ENCODE measurements at regions of chr9 and their contacts with region 1.

Region 1: GRCh38 chr9:83649080-83649479 is 26.1 kb downstream of the IDNK start:
- DNase-seq: peak; percentile 62 to 85 (median 76)
- ATAC-seq: peak; percentile 95
- H3K4me3 ChIP-seq: no peak overlapping the region
- H3K4me3 Mint-ChIP-seq: no peak overlapping the region
- H3K27ac ChIP-seq: no peak overlapping the region
- H3K27ac Mint-ChIP-seq: no peak overlapping the region
- H3K4me1 ChIP-seq: no peaks in the 10 kb centered on the region
- H3K4me1 Mint-ChIP-seq: peaks cover 7% of the 10 kb centered on the region
- H3K27me3 ChIP-seq: no peaks in the 10 kb centered on the region
- H3K27me3 Mint-ChIP-seq: no peaks in the 10 kb centered on the region
- CTCF ChIP-seq: peak; percentile 74

Region 2: GRCh38 chr9:83334320-83334719 is 314.8 kb before region 1 on chr9:
- CTCF ChIA-PET with region 1: interaction called, 3 read pairs
- POLR2A ChIA-PET with region 1: no interaction called
- intact Hi-C with region 1: loop called (anchors 2 kb)
- DNase-seq: peak; percentile 16 to 71 (median 48)
- ATAC-seq: no peak
- H3K4me3 ChIP-seq: no peak overlapping the region
- H3K4me3 Mint-ChIP-seq: no peak overlapping the region
- H3K27ac ChIP-seq: no peak overlapping the region
- H3K27ac Mint-ChIP-seq: no peak overlapping the region
- H3K4me1 ChIP-seq: no peaks in the 10 kb centered on the region
- H3K4me1 Mint-ChIP-seq: no peaks in the 10 kb centered on the region
- H3K27me3 ChIP-seq: no peaks in the 10 kb centered on the region
- H3K27me3 Mint-ChIP-seq: no peaks in the 10 kb centered on the region
- CTCF ChIP-seq: peak; percentile 65

Region 3: GRCh38 chr9:83339435-83339834 is 309.6 kb before region 1 on chr9:
- CTCF ChIA-PET with region 1: interaction called, 3 read pairs
- POLR2A ChIA-PET with region 1: no interaction called
- intact Hi-C with region 1: loop called (anchors 2 kb)
- DNase-seq: no peak
- ATAC-seq: no peak
- H3K4me3 ChIP-seq: no peak overlapping the region
- H3K4me3 Mint-ChIP-seq: no peak overlapping the region
- H3K27ac ChIP-seq: no peak overlapping the region
- H3K27ac Mint-ChIP-seq: no peak overlapping the region
- H3K4me1 ChIP-seq: no peaks in the 10 kb centered on the region
- H3K4me1 Mint-ChIP-seq: no peaks in the 10 kb centered on the region
- H3K27me3 ChIP-seq: no peaks in the 10 kb centered on the region
- H3K27me3 Mint-ChIP-seq: no peaks in the 10 kb centered on the region
- CTCF ChIP-seq: no peak

Region 4: DNA sequence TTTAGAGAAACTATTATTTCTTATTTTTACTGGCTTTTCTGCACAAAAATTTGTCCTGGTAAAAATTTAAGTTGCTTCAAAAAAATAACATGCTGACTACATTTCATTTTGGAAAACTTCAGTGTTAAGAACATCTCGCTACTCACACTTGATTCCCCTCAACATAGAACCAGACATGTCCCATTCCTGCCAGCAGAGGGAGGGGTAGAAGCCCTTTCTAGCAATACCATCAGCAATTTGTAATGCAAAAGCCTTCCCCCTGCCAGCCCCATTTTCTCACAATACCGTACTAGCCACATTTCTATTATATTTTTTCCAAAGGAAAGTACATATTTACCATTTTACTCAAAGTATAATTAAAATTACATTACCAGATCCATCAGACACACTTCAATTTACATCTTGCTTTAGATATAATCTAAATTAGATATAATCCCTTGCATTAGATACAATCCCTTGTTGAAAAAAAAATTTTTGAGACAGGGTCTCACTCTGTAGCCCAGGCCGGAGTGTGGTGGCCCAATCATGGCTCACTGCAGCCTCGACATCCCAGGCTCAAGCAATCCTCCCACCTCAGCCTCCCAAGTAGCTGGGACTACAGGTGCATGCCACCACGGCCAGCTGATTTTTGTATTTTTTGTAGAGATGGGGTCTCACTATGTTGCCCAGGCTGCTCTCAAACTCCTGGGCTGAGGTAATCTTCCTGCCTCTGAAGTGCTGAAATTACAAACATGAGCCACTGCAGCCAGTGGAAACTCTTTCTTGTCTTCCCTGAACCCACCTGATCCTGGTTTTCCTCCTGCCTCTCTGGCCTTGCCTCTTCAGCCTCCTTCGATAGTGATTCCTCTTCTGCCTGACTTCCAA is 65.7 kb before region 1 on chr9:
- CTCF ChIA-PET with region 1: no interaction called
- POLR2A ChIA-PET with region 1: no interaction called
- intact Hi-C with region 1: loop called in 1 of 2 experiments (anchors 1 kb)
- DNase-seq: peak in 7 of 14 experiments; percentile 1 to 58 (median 29)
- ATAC-seq: peak; percentile 59
- H3K4me3 ChIP-seq: no peak overlapping the region
- H3K4me3 Mint-ChIP-seq: no peak overlapping the region
- H3K27ac ChIP-seq: no peak overlapping the region
- H3K27ac Mint-ChIP-seq: no peak overlapping the region
- H3K4me1 ChIP-seq: no peaks in the 10 kb centered on the region
- H3K4me1 Mint-ChIP-seq: no peaks in the 10 kb centered on the region
- H3K27me3 ChIP-seq: no peaks in the 10 kb centered on the region
- H3K27me3 Mint-ChIP-seq: no peaks in the 10 kb centered on the region
- CTCF ChIP-seq: peak; percentile 53

Region 5: GRCh38 chr9:83596896-83597504 is 52.1 kb before region 1 on chr9:
- CTCF ChIA-PET with region 1: no interaction called
- POLR2A ChIA-PET with region 1: no interaction called
- intact Hi-C with region 1: loop called in 1 of 2 experiments (anchors 5 kb)
- DNase-seq: peak in 10 of 14 experiments; percentile 6 to 62 (median 16)
- ATAC-seq: no peak
- H3K4me3 ChIP-seq: no peak overlapping the region
- H3K4me3 Mint-ChIP-seq: no peak overlapping the region
- H3K27ac ChIP-seq: no peak overlapping the region
- H3K27ac Mint-ChIP-seq: no peak overlapping the region
- H3K4me1 ChIP-seq: no peaks in the 10 kb centered on the region
- H3K4me1 Mint-ChIP-seq: no peaks in the 10 kb centered on the region
- H3K27me3 ChIP-seq: no peaks in the 10 kb centered on the region
- H3K27me3 Mint-ChIP-seq: no peaks in the 10 kb centered on the region
- CTCF ChIP-seq: peak; percentile 54

Region 6: GRCh38 chr9:83622939-83623678 is 26.0 kb before region 1 on chr9 and contains the start of gene IDNK:
- CTCF ChIA-PET with region 1: interaction called, 20 read pairs
- POLR2A ChIA-PET with region 1: interaction called, 7 read pairs
- intact Hi-C with region 1: loop called (anchors 1 kb)
- DNase-seq: peak; percentile 37 to 84 (median 52)
- ATAC-seq: peak; percentile 88
- H3K4me3 ChIP-seq: peak within 1 kb of the TSS; percentile 73
- H3K4me3 Mint-ChIP-seq: peak within 1 kb of the TSS; percentile 99
- H3K27ac ChIP-seq: peak within 1 kb of the TSS; percentile 78 to 86
- H3K27ac Mint-ChIP-seq: peak within 1 kb of the TSS; percentile 97
- H3K4me1 ChIP-seq: peaks cover 26% of the 10 kb centered on the region
- H3K4me1 Mint-ChIP-seq: peaks cover 28% of the 10 kb centered on the region
- H3K27me3 ChIP-seq: no peaks in the 10 kb centered on the region
- H3K27me3 Mint-ChIP-seq: no peaks in the 10 kb centered on the region
- CTCF ChIP-seq: no peak
- total RNA-seq, gene IDNK: 5.4 to 5.6 TPM

Region 7: DNA sequence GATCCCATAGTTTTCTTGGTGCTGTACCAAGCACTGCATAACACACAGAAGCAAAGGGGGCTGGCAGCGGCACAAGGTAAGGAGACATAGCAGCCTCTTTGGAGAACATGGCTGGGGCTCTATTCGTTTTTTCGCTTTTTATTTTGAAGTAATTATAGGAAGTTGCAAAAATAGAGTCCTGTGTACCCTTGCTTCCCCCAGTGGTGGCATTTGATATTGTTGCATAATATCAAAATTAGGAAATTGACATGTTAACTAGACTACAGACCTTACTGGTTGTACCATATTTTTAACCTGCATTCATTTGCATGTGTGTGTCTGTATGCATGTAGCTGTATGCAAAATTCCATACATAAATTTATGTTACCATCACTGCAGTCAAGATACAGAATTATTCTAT is 65.2 kb after region 1 on chr9:
- CTCF ChIA-PET with region 1: no interaction called
- POLR2A ChIA-PET with region 1: no interaction called
- intact Hi-C with region 1: loop called in 1 of 2 experiments (anchors 5 kb)
- DNase-seq: peak in 3 of 14 experiments; percentile 19 to 42 (median 40)
- ATAC-seq: peak; percentile 49
- H3K4me3 ChIP-seq: no peak overlapping the region
- H3K4me3 Mint-ChIP-seq: no peak overlapping the region
- H3K27ac ChIP-seq: no peak overlapping the region
- H3K27ac Mint-ChIP-seq: no peak overlapping the region
- H3K4me1 ChIP-seq: no peaks in the 10 kb centered on the region
- H3K4me1 Mint-ChIP-seq: peaks cover 4% of the 10 kb centered on the region
- H3K27me3 ChIP-seq: no peaks in the 10 kb centered on the region
- H3K27me3 Mint-ChIP-seq: no peaks in the 10 kb centered on the region
- CTCF ChIP-seq: peak; percentile 53

Measured in CD4-positive, alpha-beta T cell (primary cell).